AG04449 (cell line): ENCODE measurements at regions of chr11 and their contacts with region 1.

Region 1: GRCh38 chr11:93143800-93144199 is 54.0 kb downstream of the SLC36A4 start:
- DNase-seq: no peak
- H3K4me3 ChIP-seq: no peak overlapping the region
- CTCF ChIP-seq: no peak

Region 2: DNA sequence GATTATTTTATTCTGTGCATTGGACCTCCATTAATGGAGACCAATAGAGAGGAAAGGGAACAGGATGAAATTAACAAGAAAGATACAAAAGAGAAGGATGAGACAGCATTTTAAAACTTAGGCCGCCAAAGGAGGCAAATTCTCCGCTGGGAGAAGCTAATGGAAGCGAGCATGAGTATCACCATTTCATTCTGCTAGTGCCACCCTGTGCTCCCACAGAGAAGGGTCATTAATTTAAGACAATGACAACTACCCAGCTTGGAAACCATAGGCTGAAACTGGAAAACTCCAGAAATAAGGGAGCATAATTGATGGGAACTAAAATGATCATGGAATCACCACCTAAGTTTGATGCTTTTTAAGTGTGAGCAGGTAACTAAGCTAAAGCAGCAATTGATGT is 15.2 kb before region 1 on chr11:
- CTCF ChIA-PET with region 1: interaction called, 10 read pairs
- POLR2A ChIA-PET with region 1: no interaction called
- DNase-seq: no peak
- H3K4me3 ChIP-seq: no peak overlapping the region
- CTCF ChIP-seq: no peak